HepG2 (cell line): ENCODE measurements at regions of chr22 and their contacts with region 1.

Region 1: DNA sequence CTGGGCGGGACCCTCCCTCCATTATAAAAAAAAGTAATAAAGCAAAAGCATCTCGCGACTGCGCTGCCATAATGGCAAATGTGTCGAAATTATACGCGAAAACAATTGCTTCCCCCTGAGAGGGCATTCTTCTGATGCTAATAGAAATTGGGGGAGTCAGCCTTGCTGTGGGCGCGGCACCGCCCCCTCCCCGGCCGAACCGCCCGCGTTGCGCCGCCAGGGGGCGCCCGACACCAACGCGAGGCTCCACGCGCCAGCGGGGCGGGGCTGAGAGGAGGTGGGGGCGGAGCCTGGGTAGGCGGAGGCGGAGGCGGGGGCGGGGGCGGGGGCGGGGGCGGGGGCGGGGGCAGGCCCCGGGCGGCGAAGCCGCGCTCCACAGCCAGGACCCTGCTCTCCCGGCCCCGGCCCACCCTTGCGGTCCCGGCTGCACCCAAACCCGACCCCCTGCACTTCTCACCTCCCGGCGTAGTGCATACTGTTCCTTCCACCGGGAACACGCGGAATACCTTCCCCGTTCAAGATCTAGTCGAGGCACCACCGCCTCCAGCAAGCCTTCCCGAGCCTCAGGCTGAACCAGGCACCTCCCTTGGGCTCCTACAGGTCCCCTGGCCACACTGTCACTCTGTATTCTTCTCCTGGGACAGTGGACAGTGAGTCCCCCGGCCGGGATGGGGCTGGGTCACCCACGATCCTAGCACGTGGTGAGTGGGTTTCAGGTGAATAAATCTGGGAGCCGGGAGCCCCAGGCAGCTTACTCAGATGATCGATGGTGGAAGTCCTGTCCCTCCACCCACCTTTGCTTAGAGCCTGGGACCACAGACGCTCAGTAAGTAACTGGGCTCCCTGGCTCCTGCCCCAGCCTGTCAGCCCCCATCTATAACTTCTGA is 15.5 kb upstream of the UPK3A start:
- DNase-seq: no peak
- ATAC-seq: peak; percentile 38
- H3K4me3 ChIP-seq: peak overlapping the region; percentile 81 to 90 (median 85)
- H3K27ac ChIP-seq: peak overlapping the region; percentile 72
- H3K4me1 ChIP-seq: peaks cover 49% of the 10 kb centered on the region
- H3K27me3 ChIP-seq: no peaks in the 10 kb centered on the region
- CTCF ChIP-seq: peak; percentile 84
- EP300 ChIP-seq: no peak
- POLR2A ChIP-seq: peak; percentile 27 to 80; a peak in 2 of 4 replicates
- RAD21 ChIP-seq: peak; percentile 96

Region 2: GRCh38 chr22:45208993-45209801 is 60.0 kb before region 1 on chr22:
- CTCF ChIA-PET with region 1: no interaction called
- POLR2A ChIA-PET with region 1: no interaction called
- in situ Hi-C with region 1: no loop called
- intact Hi-C with region 1: no loop called
- DNase-seq: no peak
- ATAC-seq: peak; percentile 46
- H3K4me3 ChIP-seq: no peak overlapping the region
- H3K27ac ChIP-seq: no peak overlapping the region
- H3K4me1 ChIP-seq: 0 out of 2 replicates have a peak, but pooled peaks cover 2% of the 10 kb centered on the region
- H3K27me3 ChIP-seq: no peaks in the 10 kb centered on the region
- CTCF ChIP-seq: peak; percentile 75
- EP300 ChIP-seq: no peak
- POLR2A ChIP-seq: no peak
- RAD21 ChIP-seq: peak; percentile 64

Region 3: GRCh38 chr22:45226527-45227186 is 42.5 kb before region 1 on chr22:
- CTCF ChIA-PET with region 1: no interaction called
- POLR2A ChIA-PET with region 1: no interaction called
- in situ Hi-C with region 1: no loop called
- intact Hi-C with region 1: no loop called
- DNase-seq: no peak
- ATAC-seq: no peak
- H3K4me3 ChIP-seq: no peak overlapping the region
- H3K27ac ChIP-seq: no peak overlapping the region
- H3K4me1 ChIP-seq: peaks cover 45% of the 10 kb centered on the region
- H3K27me3 ChIP-seq: no peaks in the 10 kb centered on the region
- CTCF ChIP-seq: no peak
- EP300 ChIP-seq: no peak
- POLR2A ChIP-seq: no peak
- RAD21 ChIP-seq: no peak

Region 4: GRCh38 chr22:45284705-45285262 is 15.6 kb after region 1 on chr22 and contains the start of gene UPK3A:
- CTCF ChIA-PET with region 1: interaction called, 3 read pairs
- POLR2A ChIA-PET with region 1: interaction called, 73 read pairs
- in situ Hi-C with region 1: no loop called
- intact Hi-C with region 1: no loop called
- DNase-seq: no peak
- ATAC-seq: no peak
- H3K4me3 ChIP-seq: peak within 1 kb of the TSS; percentile 30 to 63 (median 37); a peak in 5 of 6 replicates
- H3K27ac ChIP-seq: peak within 1 kb of the TSS; percentile 80
- H3K4me1 ChIP-seq: peaks cover 75% of the 10 kb centered on the region
- H3K27me3 ChIP-seq: no peaks in the 10 kb centered on the region
- CTCF ChIP-seq: no peak
- EP300 ChIP-seq: no peak
- POLR2A ChIP-seq: no peak
- RAD21 ChIP-seq: no peak
- total RNA-seq, gene UPK3A: 10.0 and 10.5 TPM in 2 replicates

Region 5: DNA sequence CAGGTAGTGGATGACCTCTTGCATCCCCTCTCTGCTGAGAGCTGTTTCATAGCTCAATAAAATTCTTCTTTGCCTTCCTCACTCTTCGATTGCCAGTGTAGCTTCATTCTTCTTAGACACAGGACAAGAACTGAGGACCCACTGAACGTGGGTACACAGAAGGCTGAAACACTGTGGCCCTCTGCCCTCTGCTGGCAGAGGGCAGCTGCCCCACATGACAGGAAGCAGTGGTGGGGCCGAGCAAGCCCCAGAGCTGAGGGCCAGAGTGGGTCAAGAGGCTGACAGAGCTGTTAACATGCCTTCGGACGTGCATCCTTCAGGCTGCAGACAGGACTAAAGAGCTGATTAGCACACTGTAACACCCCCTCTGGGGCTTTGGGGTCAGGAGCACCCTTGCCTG is 128.6 kb after region 1 on chr22:
- CTCF ChIA-PET with region 1: interaction called, 17 read pairs
- POLR2A ChIA-PET with region 1: no interaction called
- in situ Hi-C with region 1: no loop called
- intact Hi-C with region 1: loop called (anchors 5 kb)
- DNase-seq: peak; percentile 17
- ATAC-seq: peak; percentile 83
- H3K4me3 ChIP-seq: no peak overlapping the region
- H3K27ac ChIP-seq: no peak overlapping the region
- H3K4me1 ChIP-seq: peaks cover 6% of the 10 kb centered on the region; the same call in 1 of the 2 replicates
- H3K27me3 ChIP-seq: no peaks in the 10 kb centered on the region; a peak in 1 of 5 replicates
- CTCF ChIP-seq: peak; percentile 74
- EP300 ChIP-seq: no peak
- POLR2A ChIP-seq: no peak
- RAD21 ChIP-seq: no peak

Region 6: GRCh38 chr22:45435544-45436139 is 166.4 kb after region 1 on chr22:
- CTCF ChIA-PET with region 1: interaction called, 22 read pairs
- POLR2A ChIA-PET with region 1: interaction called, 6 read pairs
- in situ Hi-C with region 1: loop called (anchors 5 kb)
- intact Hi-C with region 1: loop called (anchors 1 kb)
- DNase-seq: peak; percentile 75
- ATAC-seq: peak; percentile 91
- H3K4me3 ChIP-seq: peak overlapping the region in 2 of 3 experiments; percentile 23 to 68; a peak in 4 of 6 replicates
- H3K27ac ChIP-seq: peak overlapping the region; percentile 20
- H3K4me1 ChIP-seq: peaks cover 38% of the 10 kb centered on the region
- H3K27me3 ChIP-seq: no peaks in the 10 kb centered on the region; a peak in 1 of 5 replicates
- CTCF ChIP-seq: peak; percentile 97
- EP300 ChIP-seq: peak in 1 of 2 experiments; percentile 3; a peak in 1 of 4 replicates
- POLR2A ChIP-seq: no peak
- RAD21 ChIP-seq: peak; percentile 86

Region 7: GRCh38 chr22:45553351-45554039 is 284.3 kb after region 1 on chr22:
- CTCF ChIA-PET with region 1: interaction called, 6 read pairs
- POLR2A ChIA-PET with region 1: no interaction called
- in situ Hi-C with region 1: loop called (anchors 5 kb)
- intact Hi-C with region 1: loop called (anchors 10 kb)
- DNase-seq: peak; percentile 73
- ATAC-seq: peak; percentile 82
- H3K4me3 ChIP-seq: no peak overlapping the region; a peak in 1 of 6 replicates
- H3K27ac ChIP-seq: peak overlapping the region; percentile 43
- H3K4me1 ChIP-seq: peaks cover 31% of the 10 kb centered on the region
- H3K27me3 ChIP-seq: no peaks in the 10 kb centered on the region
- CTCF ChIP-seq: peak; percentile 98
- EP300 ChIP-seq: no peak
- POLR2A ChIP-seq: no peak
- RAD21 ChIP-seq: peak; percentile 94